ENCODE measurements at regions of chr20 and their contacts with region 1.

Region 1: DNA sequence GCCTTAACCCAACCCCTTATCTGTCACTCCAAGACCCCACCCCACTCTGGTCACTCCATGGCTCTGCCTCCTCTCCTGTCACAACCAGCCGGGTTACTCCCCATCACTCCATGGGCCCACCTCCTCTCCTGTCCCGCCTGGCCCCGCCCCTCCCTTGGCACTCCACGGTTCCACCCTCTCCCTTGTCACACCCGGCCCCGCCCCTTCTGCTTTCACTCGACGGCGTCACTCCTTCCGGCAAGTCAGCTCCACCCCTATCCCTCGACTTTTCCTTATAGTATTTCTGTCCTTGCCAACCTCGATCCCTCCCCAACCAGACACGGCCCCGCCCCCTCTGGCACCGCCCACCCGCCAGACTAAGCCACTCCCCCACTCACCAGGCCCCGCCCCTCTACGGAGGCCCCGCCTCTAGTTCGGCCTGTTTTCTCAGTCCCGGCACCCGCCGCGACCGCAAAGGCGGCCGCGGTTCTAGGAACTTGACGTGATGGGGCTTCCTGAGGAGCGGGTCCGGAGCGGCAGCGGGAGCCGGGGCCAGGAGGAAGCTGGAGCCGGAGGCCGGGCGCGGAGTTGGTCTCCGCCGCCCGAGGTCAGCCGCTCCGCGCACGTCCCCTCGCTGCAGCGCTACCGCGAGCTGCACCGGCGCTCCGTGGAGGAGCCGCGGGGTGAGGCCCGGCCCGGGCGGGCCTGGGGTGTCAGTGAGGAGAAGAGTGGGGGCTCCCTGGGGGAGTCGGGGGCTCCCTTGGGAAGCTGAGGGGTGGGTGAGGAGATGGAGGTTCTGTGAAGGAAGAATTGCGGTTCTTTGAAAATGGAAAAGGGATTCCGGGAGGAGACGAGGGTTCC is at the start of gene ACSS2:
- DNase-seq: peak; percentile 99
- H3K4me3 ChIP-seq: peak within 1 kb of the TSS; percentile 55 to 79 (median 74)
- H3K27ac ChIP-seq: peak within 1 kb of the TSS; percentile 71
- H3K4me1 ChIP-seq: peaks cover 34% of the 10 kb centered on the region
- H3K27me3 ChIP-seq: no peaks in the 10 kb centered on the region
- CTCF ChIP-seq: no peak
- total RNA-seq, gene ACSS2: 79.5 to 103 TPM

Region 2: GRCh38 chr20:34579191-34579978 is 297.0 kb before region 1 on chr20:
- CTCF ChIA-PET with region 1: no interaction called
- dilution Hi-C with region 1: no loop called
- in situ Hi-C with region 1: no loop called
- intact Hi-C with region 1: loop called (anchors 1 kb)
- DNase-seq: peak; percentile 94
- H3K4me3 ChIP-seq: no peak overlapping the region
- H3K27ac ChIP-seq: peak overlapping the region; percentile 10
- H3K4me1 ChIP-seq: peaks cover 30% of the 10 kb centered on the region
- H3K27me3 ChIP-seq: no peaks in the 10 kb centered on the region
- CTCF ChIP-seq: peak; percentile 92

Region 3: DNA sequence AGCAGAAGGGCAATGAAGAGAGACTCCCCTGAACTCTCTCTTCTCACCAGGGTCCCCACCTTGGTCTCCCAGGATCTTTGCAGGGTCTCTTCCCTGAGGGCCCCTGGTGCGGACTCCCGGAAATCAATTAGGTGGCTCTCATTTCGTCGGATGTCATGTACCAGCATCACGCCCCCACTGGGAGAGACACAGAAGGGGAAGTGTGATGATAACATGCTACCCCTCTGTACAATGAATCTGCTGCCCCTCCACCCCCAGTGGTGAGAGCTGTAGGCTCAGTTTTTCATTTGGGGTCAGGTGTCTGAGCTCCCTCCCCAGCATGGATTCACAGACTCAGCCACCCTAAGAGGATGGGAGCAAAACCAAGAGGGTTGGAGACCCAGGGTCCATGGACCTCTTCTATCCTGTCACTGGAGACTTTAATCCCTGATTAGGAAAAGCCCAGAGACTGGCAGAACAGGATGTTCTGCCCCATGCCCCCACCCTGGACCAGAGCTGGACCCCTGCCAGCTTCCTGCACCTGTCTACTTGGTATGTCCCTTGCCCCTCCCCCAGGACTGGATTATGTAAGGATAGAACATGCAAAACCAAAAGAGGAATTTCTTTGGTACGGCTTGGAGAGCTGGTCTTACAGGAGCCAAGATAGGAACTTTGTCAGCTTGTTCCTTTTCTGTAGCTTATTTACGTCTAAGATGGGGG is 14.8 kb before region 1 on chr20:
- CTCF ChIA-PET with region 1: interaction called, 12 read pairs
- dilution Hi-C with region 1: no loop called
- in situ Hi-C with region 1: no loop called
- intact Hi-C with region 1: no loop called
- DNase-seq: no peak
- H3K4me3 ChIP-seq: no peak overlapping the region
- H3K27ac ChIP-seq: no peak overlapping the region
- H3K4me1 ChIP-seq: no peaks in the 10 kb centered on the region
- H3K27me3 ChIP-seq: no peaks in the 10 kb centered on the region
- CTCF ChIP-seq: no peak

Region 4: DNA sequence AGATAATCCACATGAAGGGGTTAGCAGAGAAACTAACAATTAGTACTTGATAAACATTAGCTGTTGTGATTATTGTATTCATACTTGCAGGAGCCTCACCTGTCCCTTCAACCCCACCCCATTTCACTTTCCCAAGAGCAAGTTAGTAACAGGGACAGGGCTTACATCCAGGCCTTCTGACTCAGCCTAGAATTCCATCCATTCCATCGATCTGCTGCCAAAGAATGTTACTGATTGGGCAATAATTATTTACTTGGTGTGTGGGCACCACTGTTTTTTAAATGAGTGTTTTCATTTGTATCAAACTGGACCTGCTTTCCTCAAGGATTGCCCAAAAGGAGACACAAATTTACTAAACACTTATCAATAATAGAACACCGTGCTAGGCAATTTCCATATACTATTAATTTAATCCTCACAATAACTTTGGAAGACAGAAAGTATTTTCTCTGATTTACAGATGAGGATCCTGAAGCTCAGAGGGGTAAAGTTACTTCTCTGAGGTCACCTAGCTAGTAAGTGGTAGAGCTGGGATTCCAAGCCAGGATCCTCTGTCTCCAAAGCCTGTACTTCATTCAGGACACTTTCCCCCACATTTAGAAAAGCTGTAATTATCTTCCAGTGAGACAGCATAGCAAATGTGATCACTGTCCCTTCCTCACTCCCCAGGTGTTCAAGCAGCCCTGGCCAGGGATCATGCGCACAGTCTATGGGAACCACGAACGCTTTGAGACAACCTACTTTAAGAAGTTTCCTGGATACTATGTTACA is 46.5 kb after region 1 on chr20:
- CTCF ChIA-PET with region 1: no interaction called
- dilution Hi-C with region 1: no loop called
- in situ Hi-C with region 1: no loop called
- intact Hi-C with region 1: loop called (anchors 1 kb)
- DNase-seq: peak; percentile 80
- H3K4me3 ChIP-seq: no peak overlapping the region
- H3K27ac ChIP-seq: no peak overlapping the region
- H3K4me1 ChIP-seq: peaks cover 42% of the 10 kb centered on the region
- H3K27me3 ChIP-seq: no peaks in the 10 kb centered on the region
- CTCF ChIP-seq: no peak

Region 5: DNA sequence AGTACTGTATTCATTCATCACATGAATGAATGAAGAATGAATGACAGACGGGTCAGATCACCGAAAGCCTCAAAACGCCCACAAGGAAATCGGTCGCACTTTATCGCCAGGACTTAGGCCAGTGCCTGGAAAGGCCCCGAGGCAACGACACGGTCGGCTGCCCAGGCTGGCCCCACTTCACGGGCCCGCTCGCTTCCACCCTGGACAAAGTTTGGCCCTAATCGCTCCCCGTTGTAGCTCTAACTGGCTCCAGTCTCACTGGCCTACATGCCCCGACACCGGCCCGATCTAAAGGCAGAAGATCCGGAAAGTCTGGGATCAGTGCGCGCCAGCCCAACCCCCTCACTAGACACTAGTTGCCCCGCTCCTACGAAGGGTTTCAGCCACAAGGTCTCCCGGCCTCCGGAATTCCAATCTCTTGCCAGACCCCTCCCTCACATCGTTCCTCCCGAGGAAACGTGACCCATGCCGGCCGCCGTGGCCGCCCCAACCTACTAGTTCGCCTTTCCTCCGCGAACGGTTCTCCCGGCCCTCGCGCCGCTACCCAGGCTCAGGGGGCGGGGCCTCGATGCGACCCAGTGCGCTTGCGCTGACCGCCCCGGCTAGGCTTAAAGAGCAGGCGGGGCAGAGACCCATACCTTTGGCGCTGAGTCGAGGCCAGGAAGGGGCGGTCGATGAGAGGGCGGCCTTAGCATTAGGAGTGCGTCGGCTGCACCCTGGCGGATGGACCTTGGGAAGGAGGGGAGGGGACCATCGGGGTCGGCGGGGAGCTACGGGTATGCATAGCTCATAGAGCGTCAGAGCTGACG is 79.1 kb after region 1 on chr20 and contains the starts of genes GSS and MYH7B:
- CTCF ChIA-PET with region 1: interaction called, 11 read pairs
- dilution Hi-C with region 1: no loop called
- in situ Hi-C with region 1: loop called (anchors 5 kb)
- intact Hi-C with region 1: loop called (anchors 1 kb)
- DNase-seq: peak; percentile 95
- H3K4me3 ChIP-seq: peak within 1 kb of the TSS; percentile 68 to 83 (median 79)
- H3K27ac ChIP-seq: peak within 1 kb of the TSS; percentile 76
- H3K4me1 ChIP-seq: peaks cover 6% of the 10 kb centered on the region
- H3K27me3 ChIP-seq: no peaks in the 10 kb centered on the region
- CTCF ChIP-seq: peak; percentile 6 to 66
- total RNA-seq, gene GSS: 102 to 115 TPM
- total RNA-seq, gene MYH7B: under 0.01 to 0.28 TPM

Region 6: GRCh38 chr20:34983995-34984735 is 107.8 kb after region 1 on chr20:
- CTCF ChIA-PET with region 1: no interaction called
- dilution Hi-C with region 1: no loop called
- in situ Hi-C with region 1: no loop called
- intact Hi-C with region 1: no loop called
- DNase-seq: no peak
- H3K4me3 ChIP-seq: no peak overlapping the region
- H3K27ac ChIP-seq: no peak overlapping the region
- H3K4me1 ChIP-seq: peaks cover 6% of the 10 kb centered on the region
- H3K27me3 ChIP-seq: peaks cover 2% of the 10 kb centered on the region
- CTCF ChIP-seq: no peak

Region 7: DNA sequence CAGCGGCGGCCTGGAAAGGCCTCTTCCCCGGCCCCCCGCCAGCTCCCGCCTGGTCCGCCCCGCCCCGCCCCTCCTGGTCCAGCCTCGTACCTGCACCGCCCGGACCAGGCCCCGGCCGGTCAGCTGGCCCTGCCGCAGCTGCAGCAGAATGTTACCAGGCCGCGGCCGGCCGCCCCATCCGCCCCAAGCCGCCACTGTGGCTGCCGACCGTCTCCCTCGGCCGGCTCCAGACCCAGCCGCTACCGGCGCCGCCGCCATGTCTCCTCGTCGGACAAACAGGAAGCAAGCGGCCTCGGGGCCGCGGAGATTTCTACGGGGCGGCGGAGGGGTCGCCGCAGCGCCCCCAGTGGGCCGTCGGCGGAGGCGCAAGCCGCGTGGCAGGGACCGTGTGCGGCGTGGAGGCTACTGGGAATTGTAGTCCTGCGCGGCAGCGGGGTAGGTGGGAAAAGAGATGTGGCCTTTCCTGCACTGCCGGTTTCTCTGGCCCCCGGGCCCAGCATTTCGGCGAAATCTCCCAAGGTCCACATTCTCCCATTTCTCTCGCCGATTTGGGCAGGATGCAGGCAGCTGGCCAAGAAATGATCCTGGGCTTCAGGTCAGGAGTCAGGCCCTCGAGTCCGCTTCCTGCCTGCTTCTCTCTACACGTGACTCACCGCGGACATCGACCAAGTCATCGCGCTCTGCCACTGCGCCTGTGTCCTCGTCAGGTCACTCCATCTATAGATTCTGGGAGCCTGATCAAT is 216.3 kb after region 1 on chr20 and contains the start of gene TRPC4AP:
- CTCF ChIA-PET with region 1: interaction called, 8 read pairs
- dilution Hi-C with region 1: no loop called
- in situ Hi-C with region 1: no loop called
- intact Hi-C with region 1: loop called (anchors 1 kb)
- DNase-seq: peak; percentile 87
- H3K4me3 ChIP-seq: peak within 1 kb of the TSS; percentile 75 to 99 (median 97)
- H3K27ac ChIP-seq: peak within 1 kb of the TSS; percentile 72
- H3K4me1 ChIP-seq: peaks cover 30% of the 10 kb centered on the region
- H3K27me3 ChIP-seq: no peaks in the 10 kb centered on the region
- CTCF ChIP-seq: peak; percentile 81 to 98
- total RNA-seq, gene TRPC4AP: 63.8 to 89.0 TPM

Region 8: DNA sequence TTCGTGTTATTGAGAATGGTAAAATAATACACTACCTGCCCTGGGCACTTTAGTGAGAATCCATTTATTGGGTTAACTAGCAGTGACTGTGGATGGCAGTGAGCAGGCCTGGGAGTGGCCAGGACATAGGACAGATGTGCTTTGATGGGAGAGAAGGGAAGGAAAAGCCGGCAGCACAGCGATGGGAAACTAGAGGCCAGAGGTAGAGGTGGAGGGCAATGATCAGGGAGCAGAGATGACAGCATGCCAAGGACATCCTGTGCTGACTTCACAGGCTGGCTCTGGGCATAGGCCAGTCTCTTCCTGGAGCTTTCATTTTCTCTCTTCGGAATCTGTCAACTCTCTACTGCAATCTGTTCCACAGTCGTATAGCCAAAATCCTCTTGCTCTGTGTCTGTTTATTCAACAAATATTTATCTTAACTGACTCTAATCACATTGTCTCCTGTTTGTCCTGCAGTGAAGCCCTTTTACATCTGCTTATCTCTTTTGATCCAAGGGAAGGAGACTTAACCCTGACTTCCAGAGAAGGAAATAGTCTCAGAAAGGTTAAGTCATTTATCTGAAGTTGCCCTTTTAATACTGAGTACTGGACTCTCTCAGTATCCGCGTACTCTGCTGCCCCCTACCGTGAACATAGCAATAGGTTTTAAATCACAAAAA is 331.7 kb after region 1 on chr20:
- CTCF ChIA-PET with region 1: interaction called, 4 read pairs
- dilution Hi-C with region 1: no loop called
- in situ Hi-C with region 1: no loop called
- intact Hi-C with region 1: loop called (anchors 1 kb)
- DNase-seq: peak; percentile 63
- H3K4me3 ChIP-seq: peak overlapping the region in 1 of 3 experiments; percentile 9
- H3K27ac ChIP-seq: no peak overlapping the region
- H3K4me1 ChIP-seq: peaks cover 6% of the 10 kb centered on the region
- H3K27me3 ChIP-seq: no peaks in the 10 kb centered on the region
- CTCF ChIP-seq: peak; percentile 78 to 86